SK-N-SH (cell line): ENCODE measurements at regions of chr2 and their contacts with region 1.

Region 1: GRCh38 chr2:68309426-68309825 is 10.3 kb downstream of the CNRIP1 start:
- DNase-seq: no peak
- H3K4me3 ChIP-seq: no peak overlapping the region
- H3K27ac ChIP-seq: no peak overlapping the region
- H3K4me1 ChIP-seq: no peaks in the 10 kb centered on the region; a peak in 1 of 4 replicates
- H3K27me3 ChIP-seq: no peaks in the 10 kb centered on the region
- CTCF ChIP-seq: no peak
- EP300 ChIP-seq: no peak
- RAD21 ChIP-seq: no peak

Region 2: DNA sequence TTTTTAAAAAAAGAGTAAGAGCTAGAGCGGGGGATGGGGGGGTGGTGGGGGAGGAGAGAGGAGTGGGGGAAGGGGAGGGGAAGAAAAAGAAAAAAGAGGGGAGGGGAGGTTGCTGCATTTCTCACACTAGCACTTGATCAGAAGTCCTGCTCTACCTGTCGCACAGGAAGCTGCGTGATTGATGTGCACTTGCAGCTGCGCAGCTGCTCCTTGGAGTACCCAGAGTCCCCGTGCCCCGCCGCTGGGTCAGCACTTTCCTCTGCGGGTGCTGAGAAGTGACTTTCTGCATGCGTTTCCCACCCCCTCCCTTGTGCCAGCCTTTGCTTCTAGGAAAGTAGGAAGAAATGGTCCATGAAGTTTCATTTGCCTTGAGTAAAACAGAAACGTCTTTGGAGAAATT is 615.0 kb before region 1 on chr2:
- CTCF ChIA-PET with region 1: no interaction called
- POLR2A ChIA-PET with region 1: no interaction called
- DNase-seq: no peak
- H3K4me3 ChIP-seq: no peak overlapping the region
- H3K27ac ChIP-seq: no peak overlapping the region; a peak in 1 of 4 replicates
- H3K4me1 ChIP-seq: no peaks in the 10 kb centered on the region; a peak in 1 of 4 replicates
- H3K27me3 ChIP-seq: no peaks in the 10 kb centered on the region
- CTCF ChIP-seq: no peak
- EP300 ChIP-seq: no peak
- RAD21 ChIP-seq: no peak

Region 3: DNA sequence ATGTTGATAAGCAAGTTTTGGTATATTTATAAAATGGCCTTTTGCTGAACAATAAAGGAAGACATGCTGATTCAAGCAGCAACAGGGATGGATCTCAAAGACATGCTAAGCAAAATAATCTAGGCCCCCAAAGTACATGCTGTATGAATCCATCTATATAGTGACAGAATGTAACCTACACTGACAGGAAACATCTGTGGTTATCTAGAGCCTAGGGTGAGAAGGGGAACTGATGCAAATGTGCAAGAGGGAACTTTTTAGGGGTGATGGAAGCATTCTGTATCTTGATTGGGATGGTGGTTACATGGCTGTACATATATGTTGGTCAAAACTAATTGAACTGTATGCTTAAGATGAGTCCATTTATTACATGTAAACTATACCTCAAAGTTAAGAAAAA is 13.9 kb before region 1 on chr2:
- CTCF ChIA-PET with region 1: interaction called, 32 read pairs
- POLR2A ChIA-PET with region 1: no interaction called
- DNase-seq: no peak
- H3K4me3 ChIP-seq: no peak overlapping the region
- H3K27ac ChIP-seq: no peak overlapping the region
- H3K4me1 ChIP-seq: no peaks in the 10 kb centered on the region; a peak in 1 of 4 replicates
- H3K27me3 ChIP-seq: no peaks in the 10 kb centered on the region
- CTCF ChIP-seq: no peak
- EP300 ChIP-seq: no peak
- RAD21 ChIP-seq: no peak

Region 4: DNA sequence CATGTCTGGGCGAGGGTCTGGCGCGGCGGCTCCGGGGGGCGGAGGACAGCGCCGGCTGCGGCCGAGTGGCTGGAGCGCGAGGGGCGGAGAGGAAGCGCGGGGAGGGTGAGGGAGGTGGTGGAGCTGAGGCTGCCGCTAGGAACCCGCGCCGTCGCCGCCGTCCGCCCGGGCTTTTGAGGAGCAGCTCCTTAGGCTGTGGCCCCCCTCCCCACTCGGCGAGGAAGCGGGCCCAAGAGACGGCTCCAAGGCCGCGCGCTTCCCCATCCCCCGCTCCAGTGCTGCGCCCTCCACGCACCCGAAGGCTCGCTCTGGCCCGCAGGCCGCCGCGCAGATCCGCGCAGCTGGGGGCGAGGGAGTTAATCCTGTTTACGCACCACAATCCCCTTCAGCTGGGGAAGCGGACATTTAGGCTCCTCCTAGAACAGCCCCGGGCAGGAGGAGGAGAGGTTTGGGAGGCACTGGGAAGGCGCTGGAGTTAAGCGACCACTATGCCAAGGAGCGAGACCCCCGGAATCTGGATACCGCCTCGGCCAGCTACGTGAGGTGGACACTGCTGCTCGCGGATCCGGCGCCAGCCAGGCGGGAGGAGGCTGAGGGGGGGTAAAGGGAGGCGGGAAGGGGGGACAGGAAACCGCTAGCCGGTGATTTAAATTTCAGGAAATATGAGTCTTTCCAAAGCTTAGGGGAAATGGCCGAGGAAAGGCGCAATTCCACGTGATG is 10.1 kb after region 1 on chr2 and contains the start of gene CNRIP1:
- CTCF ChIA-PET with region 1: interaction called, 13 read pairs
- POLR2A ChIA-PET with region 1: interaction called, 6 read pairs
- DNase-seq: peak; percentile 87
- H3K4me3 ChIP-seq: peak within 1 kb of the TSS; percentile 91 to 94
- H3K27ac ChIP-seq: peak within 1 kb of the TSS; percentile 89 to 97
- H3K4me1 ChIP-seq: peaks cover 7 to 11% of the 10 kb centered on the region in 2 experiments; a peak in 3 of 4 replicates
- H3K27me3 ChIP-seq: no peaks in the 10 kb centered on the region
- CTCF ChIP-seq: no peak
- EP300 ChIP-seq: peak in 1 of 2 experiments; percentile 57; a peak in 1 of 4 replicates
- RAD21 ChIP-seq: no peak
- polyA plus RNA-seq, gene CNRIP1: 55.5 and 63.0 TPM in 2 replicates